CD4-positive, alpha-beta memory T cell (primary cell): ENCODE measurements at regions of chr1 and their contacts with region 1.

Region 1: DNA sequence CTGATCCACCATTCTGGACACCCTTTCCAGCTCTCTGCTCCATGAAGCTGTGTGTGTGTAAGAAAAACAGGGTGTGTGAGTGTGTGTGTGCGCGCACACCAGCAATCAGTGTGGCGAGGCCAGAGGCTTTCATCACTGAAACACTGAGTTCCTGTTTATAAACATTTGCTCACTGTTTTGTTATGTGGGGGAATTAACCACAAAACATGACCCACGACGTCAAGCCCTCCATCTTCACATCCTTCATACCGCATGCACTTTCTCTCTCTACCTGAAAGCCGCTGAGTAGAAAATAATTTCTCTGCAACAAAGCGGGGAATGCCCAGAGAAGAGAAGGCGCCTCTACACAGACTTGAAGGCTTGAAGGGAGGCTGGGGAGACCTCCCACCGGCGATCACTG is 148.9 kb upstream of the IRF2BP2 start:
- DNase-seq: peak; percentile 78 to 89 (median 83)
- H3K4me3 ChIP-seq: no peak overlapping the region
- H3K4me3 Mint-ChIP-seq: peak overlapping the region; percentile 27 to 85 (median 70)
- H3K27ac ChIP-seq: peak overlapping the region; percentile 36
- H3K27ac Mint-ChIP-seq: peak overlapping the region; percentile 88 to 99 (median 97)
- H3K4me1 ChIP-seq: peaks cover 39% of the 10 kb centered on the region
- H3K4me1 Mint-ChIP-seq: peaks cover 22 to 49% (median 33%) of the 10 kb centered on the region in 4 donors
- H3K27me3 ChIP-seq: no peaks in the 10 kb centered on the region
- H3K27me3 Mint-ChIP-seq: no peaks in the 10 kb centered on the region

Region 2: DNA sequence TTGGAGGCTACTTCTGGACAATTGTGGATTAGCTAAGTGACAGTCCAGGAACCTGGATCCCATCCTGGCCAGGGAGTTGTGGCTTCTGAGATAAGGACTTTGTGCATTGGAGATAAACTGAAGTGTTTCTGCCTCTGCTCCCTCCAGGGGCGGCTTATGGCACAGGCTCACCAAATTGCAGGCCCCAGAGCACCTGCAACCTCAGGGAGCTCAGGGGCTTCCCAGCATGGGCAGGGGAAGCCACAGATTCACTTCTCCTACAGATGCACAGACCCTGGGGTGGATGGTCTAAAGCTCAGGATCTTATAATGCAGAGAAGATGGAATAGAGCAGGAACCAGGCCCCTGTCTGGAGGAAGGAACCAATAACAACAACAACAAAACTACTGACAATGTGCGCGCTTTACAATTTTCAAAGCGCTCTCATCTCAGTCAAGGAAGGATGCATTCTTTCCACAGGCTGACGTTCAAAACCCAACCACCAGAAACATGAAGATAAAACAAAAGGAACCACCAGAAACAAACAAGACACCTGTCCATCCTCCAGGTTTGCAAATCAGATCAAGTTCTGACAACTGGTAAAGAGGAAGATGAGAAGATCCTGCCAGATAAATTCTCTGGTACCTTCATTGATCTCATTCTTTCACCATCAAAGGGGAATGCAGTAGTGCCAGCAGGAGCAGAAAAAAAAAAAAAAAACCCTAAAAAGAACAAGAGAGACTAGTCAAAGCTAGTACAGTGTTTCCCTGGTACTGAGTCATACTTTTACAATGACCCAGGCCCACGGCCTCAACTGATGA is 27.9 kb before region 1 on chr1:
- CTCF ChIA-PET with region 1: no interaction called
- POLR2A ChIA-PET with region 1: interaction called, 5 read pairs
- intact Hi-C with region 1: loop called (anchors 2 kb)
- DNase-seq: peak; percentile 78 to 87 (median 79)
- H3K4me3 ChIP-seq: no peak overlapping the region
- H3K4me3 Mint-ChIP-seq: peak overlapping the region; percentile 21 to 73 (median 62)
- H3K27ac ChIP-seq: peak overlapping the region; percentile 60
- H3K27ac Mint-ChIP-seq: peak overlapping the region; percentile 86 to 98 (median 93)
- H3K4me1 ChIP-seq: peaks cover 70% of the 10 kb centered on the region
- H3K4me1 Mint-ChIP-seq: peaks cover 30 to 69% (median 57%) of the 10 kb centered on the region in 4 donors
- H3K27me3 ChIP-seq: no peaks in the 10 kb centered on the region
- H3K27me3 Mint-ChIP-seq: no peaks in the 10 kb centered on the region

Region 3: GRCh38 chr1:236489710-236490377 is 1731.0 kb after region 1 on chr1:
- CTCF ChIA-PET with region 1: no interaction called
- POLR2A ChIA-PET with region 1: no interaction called
- intact Hi-C with region 1: no loop called
- DNase-seq: peak in 4 of 5 donors; percentile 43 to 50 (median 44)
- H3K4me3 ChIP-seq: no peak overlapping the region
- H3K4me3 Mint-ChIP-seq: no peak overlapping the region
- H3K27ac ChIP-seq: no peak overlapping the region
- H3K27ac Mint-ChIP-seq: no peak overlapping the region
- H3K4me1 ChIP-seq: no peaks in the 10 kb centered on the region
- H3K4me1 Mint-ChIP-seq: peaks cover 13 to 22% (median 16%) of the 10 kb centered on the region in 4 donors
- H3K27me3 ChIP-seq: no peaks in the 10 kb centered on the region
- H3K27me3 Mint-ChIP-seq: peaks cover 2 to 3% of the 10 kb centered on the region in 2 donors